Activated CD4-positive, alpha-beta T cell treated with anti-CD3 and anti-CD28 coated beads, Interleukin-2, amount 10 ng/mL, durations not matched to agents 24 days and 14 days (primary cell): ENCODE measurements at regions of chr5 and their contacts with region 1.

Region 1: GRCh38 chr5:91101600-91102379 is 281.3 kb downstream of the ARRDC3 start:
- DNase-seq: peak; percentile 83
- H3K4me3 Mint-ChIP-seq: no peak overlapping the region
- H3K27ac Mint-ChIP-seq: no peak overlapping the region
- H3K4me1 Mint-ChIP-seq: peaks cover 2% of the 10 kb centered on the region
- H3K27me3 Mint-ChIP-seq: peaks cover 21% of the 10 kb centered on the region

Region 2: DNA sequence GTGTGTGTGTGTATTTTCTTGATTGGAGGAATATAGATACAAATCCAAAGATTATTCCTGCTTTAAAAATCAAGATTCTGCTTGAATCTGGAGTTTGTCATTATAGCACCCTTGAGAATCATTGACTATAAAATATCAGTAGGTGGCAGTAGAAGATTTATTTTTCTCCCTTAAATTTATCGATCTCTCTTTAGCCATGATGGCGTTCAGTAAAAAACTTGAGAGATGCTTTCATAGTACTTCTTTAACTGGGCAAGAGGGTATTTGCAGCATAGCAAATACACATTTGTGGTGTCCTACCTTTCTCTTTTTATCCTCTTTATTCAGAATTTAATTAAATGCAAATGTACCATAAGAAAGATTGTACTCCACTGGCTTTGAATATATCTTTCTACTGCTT is 235.5 kb before region 1 on chr5:
- intact Hi-C with region 1: loop called (anchors 5 kb)
- DNase-seq: no peak
- H3K4me3 Mint-ChIP-seq: no peak overlapping the region
- H3K27ac Mint-ChIP-seq: no peak overlapping the region
- H3K4me1 Mint-ChIP-seq: no peaks in the 10 kb centered on the region
- H3K27me3 Mint-ChIP-seq: peaks cover 21% of the 10 kb centered on the region

Region 3: GRCh38 chr5:90932052-90932699 is 169.6 kb before region 1 on chr5:
- intact Hi-C with region 1: loop called (anchors 2 kb)
- DNase-seq: peak; percentile 78
- H3K4me3 Mint-ChIP-seq: no peak overlapping the region
- H3K27ac Mint-ChIP-seq: no peak overlapping the region
- H3K4me1 Mint-ChIP-seq: peaks cover 4% of the 10 kb centered on the region
- H3K27me3 Mint-ChIP-seq: no peaks in the 10 kb centered on the region

Region 4: DNA sequence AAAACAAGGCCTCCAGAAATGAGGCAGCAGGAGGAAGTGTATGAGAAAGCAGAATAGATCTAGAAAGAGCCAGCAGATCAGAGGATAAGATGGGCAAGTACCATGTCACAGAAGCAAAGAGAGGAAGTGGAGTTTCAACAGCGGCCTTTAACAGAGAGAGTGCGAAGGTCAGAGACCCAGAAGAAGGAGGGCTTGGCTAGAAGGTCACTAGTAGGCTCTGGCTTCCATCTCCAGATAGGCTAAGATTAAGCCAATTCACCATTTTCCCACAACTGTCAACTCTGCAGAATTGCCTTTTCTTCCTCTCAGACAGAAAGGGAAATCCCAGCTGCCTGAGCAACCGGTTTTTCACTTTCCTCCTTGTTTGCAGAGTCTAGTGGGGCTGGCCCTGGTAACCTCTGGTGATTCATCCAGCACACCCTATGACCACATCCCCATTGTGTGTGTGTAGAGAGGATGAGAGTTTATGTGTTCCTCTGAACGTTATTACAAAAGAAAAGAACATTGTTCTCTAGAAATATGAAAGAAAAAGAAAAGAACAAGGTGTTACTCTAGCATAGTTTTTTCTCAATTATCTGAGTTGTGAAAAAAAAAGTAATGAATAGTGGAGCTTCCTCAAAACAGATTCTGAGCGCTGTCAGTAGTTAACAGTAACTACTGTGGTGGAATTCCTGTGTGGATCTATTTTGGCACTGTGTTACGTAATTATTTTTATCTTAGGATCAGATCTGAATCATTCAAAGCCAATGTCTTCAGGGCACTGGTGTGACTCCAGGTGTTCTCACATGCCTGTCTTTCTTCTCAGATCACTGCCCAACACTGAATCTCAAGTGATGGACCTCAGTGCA is 61.0 kb after region 1 on chr5:
- intact Hi-C with region 1: loop called (anchors 5 kb)
- DNase-seq: peak; percentile 90
- H3K4me3 Mint-ChIP-seq: peak overlapping the region; percentile 63
- H3K27ac Mint-ChIP-seq: peak overlapping the region; percentile 88
- H3K4me1 Mint-ChIP-seq: peaks cover 25% of the 10 kb centered on the region
- H3K27me3 Mint-ChIP-seq: peaks cover 3% of the 10 kb centered on the region

Region 5: GRCh38 chr5:91206734-91207133 is 104.9 kb after region 1 on chr5:
- intact Hi-C with region 1: no loop called
- DNase-seq: no peak
- H3K4me3 Mint-ChIP-seq: no peak overlapping the region
- H3K27ac Mint-ChIP-seq: no peak overlapping the region
- H3K4me1 Mint-ChIP-seq: no peaks in the 10 kb centered on the region
- H3K27me3 Mint-ChIP-seq: peaks cover 12% of the 10 kb centered on the region

Region 6: GRCh38 chr5:91219803-91220371 is 118.1 kb after region 1 on chr5:
- intact Hi-C with region 1: loop called (anchors 2 kb)
- DNase-seq: peak; percentile 69
- H3K4me3 Mint-ChIP-seq: no peak overlapping the region
- H3K27ac Mint-ChIP-seq: no peak overlapping the region
- H3K4me1 Mint-ChIP-seq: peaks cover 2% of the 10 kb centered on the region
- H3K27me3 Mint-ChIP-seq: peaks cover 18% of the 10 kb centered on the region

Region 7: DNA sequence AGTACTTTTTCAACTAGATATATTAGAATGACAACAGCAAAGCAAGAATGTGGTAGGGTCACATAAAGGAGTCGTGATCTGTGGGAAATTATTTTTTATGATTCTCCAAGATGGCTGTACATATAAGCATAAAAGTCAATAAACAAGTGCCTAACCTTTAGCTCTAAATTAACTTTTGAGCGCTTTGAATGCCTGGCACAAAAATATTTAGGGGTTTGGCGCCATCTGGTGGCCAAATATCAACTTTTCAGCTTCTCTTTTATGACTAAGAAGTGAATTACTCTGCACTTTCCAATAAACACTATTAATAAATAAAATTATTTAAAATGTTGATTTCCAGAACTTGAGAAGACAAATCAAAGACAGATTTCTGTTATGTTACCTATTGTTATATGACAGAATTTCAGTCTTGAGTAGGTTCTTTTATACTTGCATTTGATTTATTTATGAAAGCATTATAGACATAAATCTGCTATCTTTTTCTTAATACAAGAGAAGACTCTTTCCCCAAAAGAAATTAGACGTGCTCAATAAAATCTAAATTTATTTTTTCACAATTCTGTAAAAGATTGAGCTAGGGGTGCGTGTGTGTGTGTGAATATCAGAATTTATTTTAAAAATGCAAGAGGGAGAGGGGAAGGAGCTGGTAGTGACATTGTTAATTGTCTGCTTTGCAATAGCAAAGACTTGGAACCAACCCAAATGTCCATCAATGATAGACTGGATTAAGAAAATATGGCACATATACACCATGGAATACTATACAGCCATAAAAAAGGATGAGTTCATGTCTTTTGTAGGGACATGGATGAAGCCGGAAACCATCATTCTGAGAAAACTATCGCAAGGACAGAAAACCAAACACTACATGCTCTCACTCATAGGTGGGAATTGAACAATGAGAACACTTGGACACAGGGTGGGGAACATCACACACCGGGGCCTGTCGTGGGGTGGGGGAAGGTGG is 318.1 kb after region 1 on chr5:
- intact Hi-C with region 1: loop called (anchors 1 kb)
- DNase-seq: peak; percentile 88
- H3K4me3 Mint-ChIP-seq: no peak overlapping the region
- H3K27ac Mint-ChIP-seq: no peak overlapping the region
- H3K4me1 Mint-ChIP-seq: no peaks in the 10 kb centered on the region
- H3K27me3 Mint-ChIP-seq: peaks cover 6% of the 10 kb centered on the region